Naive thymus-derived CD4-positive, alpha-beta T cell (primary cell): ENCODE measurements at regions of chr5 and their contacts with region 1.

Region 1: GRCh38 chr5:40879163-40879942 is 29.9 kb upstream of the C7 start:
- DNase-seq: peak in 5 of 9 donors; percentile 23 to 39 (median 29)
- ATAC-seq: peak; percentile 45
- H3K4me3 ChIP-seq: no peak overlapping the region
- H3K4me3 Mint-ChIP-seq: no peak overlapping the region
- H3K27ac ChIP-seq: no peak overlapping the region
- H3K27ac Mint-ChIP-seq: no peak overlapping the region
- H3K4me1 ChIP-seq: no peaks in the 10 kb centered on the region
- H3K4me1 Mint-ChIP-seq: peaks cover 0 to 5% (median 0%) of the 10 kb centered on the region in 7 donors
- H3K27me3 ChIP-seq: no peaks in the 10 kb centered on the region
- H3K27me3 Mint-ChIP-seq: peaks cover 0 to 9% (median 0%) of the 10 kb centered on the region in 5 donors

Region 2: DNA sequence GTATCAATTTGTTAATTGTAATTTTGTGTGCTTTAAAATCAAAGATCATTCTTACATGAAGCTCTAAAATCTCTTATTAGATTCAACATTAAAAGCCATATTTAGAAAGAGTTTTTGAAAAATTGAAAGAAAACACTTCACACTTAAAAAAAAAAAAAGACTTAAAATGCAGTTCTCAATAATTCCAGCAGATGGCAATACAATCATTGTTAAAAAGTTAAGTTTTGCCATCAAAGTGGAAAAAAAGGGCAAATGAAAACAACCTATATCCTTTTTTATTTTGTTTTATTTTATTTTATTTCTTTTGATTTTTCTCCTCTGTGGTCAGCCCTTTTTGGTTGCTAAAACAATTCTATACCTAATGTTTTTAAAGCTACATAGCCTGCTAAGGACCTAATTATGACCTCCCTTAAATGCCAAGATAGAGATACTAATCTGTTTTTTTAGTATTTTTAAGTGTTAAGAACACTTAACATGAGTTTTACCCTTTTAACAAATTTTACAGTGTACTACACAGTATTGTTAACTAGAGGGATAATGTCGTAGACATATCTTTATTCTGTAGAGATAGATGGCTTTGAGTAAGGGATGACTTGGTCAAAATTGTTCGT is 1300.4 kb before region 1 on chr5:
- CTCF ChIA-PET with region 1: no interaction called
- POLR2A ChIA-PET with region 1: no interaction called
- intact Hi-C with region 1: loop called (anchors 1 kb)
- DNase-seq: peak in 6 of 9 donors; percentile 2 to 31 (median 18)
- ATAC-seq: no peak
- H3K4me3 ChIP-seq: no peak overlapping the region
- H3K4me3 Mint-ChIP-seq: no peak overlapping the region
- H3K27ac ChIP-seq: no peak overlapping the region
- H3K27ac Mint-ChIP-seq: no peak overlapping the region
- H3K4me1 ChIP-seq: peaks cover 0 to 9% of the 10 kb centered on the region in 2 donors
- H3K4me1 Mint-ChIP-seq: peaks cover 6 to 17% (median 8%) of the 10 kb centered on the region in 7 donors
- H3K27me3 ChIP-seq: no peaks in the 10 kb centered on the region
- H3K27me3 Mint-ChIP-seq: peaks cover 0 to 23% (median 0%) of the 10 kb centered on the region in 5 donors

Region 3: DNA sequence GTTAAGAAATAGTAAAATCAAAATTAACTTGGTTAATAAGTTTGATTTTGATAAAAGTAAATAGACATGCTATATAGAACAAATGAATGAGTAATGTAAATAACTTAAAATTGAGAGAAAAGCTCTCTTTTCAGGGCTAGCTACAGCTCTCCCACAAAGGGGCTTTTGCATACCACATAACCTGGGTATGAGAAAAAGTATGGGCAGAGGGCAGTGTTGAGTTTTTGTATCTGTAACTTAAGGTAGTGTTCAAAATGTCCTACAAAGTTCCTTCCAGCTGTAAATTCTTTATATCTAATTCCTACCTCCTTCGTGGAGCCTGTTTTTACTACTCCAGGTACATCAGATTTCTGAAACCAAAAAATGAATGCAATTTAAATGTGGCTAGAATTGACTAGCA is 104.7 kb before region 1 on chr5:
- CTCF ChIA-PET with region 1: no interaction called
- POLR2A ChIA-PET with region 1: no interaction called
- intact Hi-C with region 1: loop called in 1 of 2 experiments (anchors 5 kb)
- DNase-seq: no peak
- ATAC-seq: no peak
- H3K4me3 ChIP-seq: no peak overlapping the region
- H3K4me3 Mint-ChIP-seq: no peak overlapping the region
- H3K27ac ChIP-seq: no peak overlapping the region
- H3K27ac Mint-ChIP-seq: no peak overlapping the region
- H3K4me1 ChIP-seq: no peaks in the 10 kb centered on the region
- H3K4me1 Mint-ChIP-seq: peaks cover 7 to 12% (median 9%) of the 10 kb centered on the region in 7 donors
- H3K27me3 ChIP-seq: no peaks in the 10 kb centered on the region
- H3K27me3 Mint-ChIP-seq: no peaks in the 10 kb centered on the region

Region 4: DNA sequence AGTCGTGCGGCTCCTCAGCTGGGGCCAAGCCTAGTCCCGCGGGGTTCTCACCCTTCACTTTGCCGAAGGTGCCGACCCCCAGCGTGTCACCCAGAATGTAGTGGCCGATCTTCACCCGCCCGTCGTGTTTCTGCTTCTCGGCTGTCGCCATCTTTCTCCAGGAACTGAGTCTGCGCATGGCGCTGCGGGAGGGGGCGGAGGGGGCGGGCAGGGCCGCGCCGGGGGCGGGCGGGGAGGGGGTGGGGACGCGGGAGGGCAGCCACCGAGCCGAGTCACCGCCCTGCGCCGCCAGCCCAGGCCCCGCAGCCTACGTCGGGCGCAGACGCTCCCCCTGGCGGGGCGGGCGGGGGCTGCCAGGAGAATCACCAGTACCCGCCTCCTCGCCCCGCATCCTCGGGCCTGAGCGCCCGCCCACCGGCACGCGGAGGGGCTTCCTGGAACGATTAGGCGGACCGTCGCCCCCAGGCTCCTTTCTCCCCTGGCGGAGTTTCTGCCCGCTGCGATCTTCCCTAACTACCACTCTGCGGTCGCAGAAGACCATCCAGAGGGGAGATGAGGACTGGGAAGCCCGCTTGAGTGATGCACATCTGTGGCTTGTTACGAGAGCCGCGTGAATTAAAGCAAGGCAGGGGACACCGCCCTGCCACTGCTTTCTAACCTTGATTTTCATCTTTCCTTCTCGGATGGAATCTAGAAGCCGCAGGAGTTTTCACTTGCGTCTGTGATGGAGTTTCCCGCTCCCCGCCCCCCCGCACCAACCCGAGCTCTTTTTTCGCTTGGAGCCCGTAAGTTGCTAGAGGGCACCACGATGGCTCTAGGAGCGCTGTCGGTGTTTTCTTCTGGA is 81.1 kb before region 1 on chr5 and contains the start of gene PRKAA1:
- CTCF ChIA-PET with region 1: interaction called, 3 read pairs
- POLR2A ChIA-PET with region 1: no interaction called
- intact Hi-C with region 1: loop called in 1 of 2 experiments (anchors 1 kb)
- DNase-seq: peak; percentile 86 to 92 (median 91)
- ATAC-seq: peak; percentile 98
- H3K4me3 ChIP-seq: peak within 1 kb of the TSS; percentile 98
- H3K4me3 Mint-ChIP-seq: peak within 1 kb of the TSS; percentile 86 to 96 (median 94)
- H3K27ac ChIP-seq: peak within 1 kb of the TSS; percentile 91
- H3K27ac Mint-ChIP-seq: peak within 1 kb of the TSS; percentile 74 to 96 (median 94)
- H3K4me1 ChIP-seq: peaks cover 12 to 16% of the 10 kb centered on the region in 2 donors
- H3K4me1 Mint-ChIP-seq: peaks cover 28 to 55% (median 44%) of the 10 kb centered on the region in 7 donors
- H3K27me3 ChIP-seq: no peaks in the 10 kb centered on the region
- H3K27me3 Mint-ChIP-seq: peaks cover 0 to 17% (median 0%) of the 10 kb centered on the region in 5 donors
- total RNA-seq, gene PRKAA1: 65.5 to 103 (median 98.1) TPM